ENCODE measurements at regions of chr11 and their contacts with region 1.

Region 1: GRCh38 chr11:126824035-126824607 is 176.4 kb downstream of the KIRREL3 start:
- DNase-seq: no peak
- ATAC-seq: no peak
- H3K4me3 ChIP-seq: no peak overlapping the region
- H3K27ac ChIP-seq: no peak overlapping the region
- H3K4me1 ChIP-seq: no peaks in the 10 kb centered on the region
- H3K27me3 ChIP-seq: peaks cover 0 to 26% (median 0%) of the 10 kb centered on the region in 9 donors
- CTCF ChIP-seq: no peak
- POLR2A ChIP-seq: no peak

Region 2: GRCh38 chr11:126573325-126574076 is 250.6 kb before region 1 on chr11:
- intact Hi-C with region 1: loop called in 1 of 10 experiments (anchors 5 kb)
- DNase-seq: no peak
- ATAC-seq: no peak
- H3K4me3 ChIP-seq: no peak overlapping the region
- H3K27ac ChIP-seq: no peak overlapping the region
- H3K4me1 ChIP-seq: no peaks in the 10 kb centered on the region
- H3K27me3 ChIP-seq: peaks cover 0 to 16% (median 0%) of the 10 kb centered on the region in 9 donors
- CTCF ChIP-seq: peak in 1 of 12 donors; percentile 11
- POLR2A ChIP-seq: no peak

Region 3: GRCh38 chr11:126764231-126764630 is 59.9 kb before region 1 on chr11:
- intact Hi-C with region 1: loop called in 1 of 10 experiments (anchors 10 kb)
- DNase-seq: no peak
- ATAC-seq: no peak
- H3K4me3 ChIP-seq: no peak overlapping the region
- H3K27ac ChIP-seq: no peak overlapping the region
- H3K4me1 ChIP-seq: no peaks in the 10 kb centered on the region
- H3K27me3 ChIP-seq: no peaks in the 10 kb centered on the region
- CTCF ChIP-seq: no peak
- POLR2A ChIP-seq: no peak

Region 4: DNA sequence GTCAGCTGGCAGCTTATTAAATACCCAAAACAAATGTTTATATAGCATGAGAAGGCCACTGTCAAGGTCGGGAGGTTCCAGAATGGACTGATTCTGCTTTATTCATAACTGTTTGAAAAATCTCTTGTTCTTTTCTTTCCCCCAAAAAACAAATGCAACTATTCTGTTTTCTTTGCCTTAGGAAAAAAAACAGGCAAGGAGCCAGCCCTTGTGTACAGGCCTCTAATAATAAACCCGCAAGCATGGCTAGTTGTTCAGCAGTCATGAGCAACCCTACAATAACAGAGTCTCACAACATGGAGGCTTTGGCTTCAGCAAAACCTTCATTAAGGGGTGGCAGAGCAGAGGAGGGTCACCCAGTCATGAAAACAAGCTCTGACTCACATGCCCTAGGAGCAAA is 15.3 kb before region 1 on chr11:
- intact Hi-C with region 1: no loop called
- DNase-seq: no peak
- ATAC-seq: no peak
- H3K4me3 ChIP-seq: no peak overlapping the region
- H3K27ac ChIP-seq: no peak overlapping the region
- H3K4me1 ChIP-seq: no peaks in the 10 kb centered on the region
- H3K27me3 ChIP-seq: peaks cover 0 to 14% (median 0%) of the 10 kb centered on the region in 9 donors
- CTCF ChIP-seq: no peak
- POLR2A ChIP-seq: no peak

Region 5: DNA sequence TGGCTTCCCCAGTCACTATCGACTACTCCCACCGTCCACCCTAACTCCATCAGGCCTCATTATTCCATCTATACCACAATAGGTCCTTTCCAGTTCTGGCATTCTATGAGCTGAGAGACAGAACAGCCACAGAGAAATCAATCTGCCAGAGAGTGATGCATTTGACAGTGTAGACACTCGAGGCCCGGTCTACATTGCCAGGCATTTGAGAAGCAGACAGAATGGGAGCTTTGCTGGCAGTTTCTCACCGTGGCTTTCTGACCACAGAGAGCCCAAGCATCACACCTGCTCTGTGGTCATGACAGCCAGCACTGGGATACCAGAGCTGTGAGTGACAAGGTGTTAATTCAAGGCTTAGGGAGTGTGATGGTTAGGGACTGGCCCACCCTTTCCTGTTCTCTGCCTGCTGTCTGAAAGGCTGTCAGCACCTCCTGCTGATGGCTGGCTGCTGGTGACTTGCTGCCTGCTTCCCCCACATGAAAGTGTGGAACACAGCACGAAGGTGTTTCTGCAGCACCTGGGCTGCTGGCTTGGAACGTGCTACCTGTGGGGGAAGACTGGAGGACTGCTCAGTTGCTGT is 38.6 kb after region 1 on chr11:
- intact Hi-C with region 1: no loop called
- DNase-seq: no peak
- ATAC-seq: no peak
- H3K4me3 ChIP-seq: no peak overlapping the region
- H3K27ac ChIP-seq: no peak overlapping the region
- H3K4me1 ChIP-seq: no peaks in the 10 kb centered on the region
- H3K27me3 ChIP-seq: peaks cover 0 to 36% (median 6%) of the 10 kb centered on the region in 9 donors
- CTCF ChIP-seq: no peak
- POLR2A ChIP-seq: no peak

Measured in heart left ventricle (tissue), 16 donors.